ENCODE measurements at regions of chr6 and their contacts with region 1.

Region 1: GRCh38 chr6:119110601-119111548 is 32.4 kb upstream of the FAM184A start:
- DNase-seq: peak in 2 of 5 donors; percentile 16 to 44
- H3K4me3 ChIP-seq: no peak overlapping the region
- H3K27ac ChIP-seq: no peak overlapping the region
- H3K4me1 ChIP-seq: no peaks in the 10 kb centered on the region
- H3K27me3 ChIP-seq: no peaks in the 10 kb centered on the region
- CTCF ChIP-seq: peak; percentile 32 to 76 (median 56)
- EP300 ChIP-seq: no peak
- POLR2A ChIP-seq: no peak

Region 2: GRCh38 chr6:118240878-118241528 is 869.9 kb before region 1 on chr6:
- intact Hi-C with region 1: loop called in 1 of 4 experiments (anchors 5 kb)
- DNase-seq: no peak
- H3K4me3 ChIP-seq: no peak overlapping the region
- H3K27ac ChIP-seq: no peak overlapping the region
- H3K4me1 ChIP-seq: no peaks in the 10 kb centered on the region
- H3K27me3 ChIP-seq: no peaks in the 10 kb centered on the region
- CTCF ChIP-seq: no peak
- EP300 ChIP-seq: no peak
- POLR2A ChIP-seq: no peak

Region 3: GRCh38 chr6:118963003-118963402 is 147.9 kb before region 1 on chr6:
- intact Hi-C with region 1: loop called (anchors 2 to 5 kb)
- DNase-seq: no peak
- H3K4me3 ChIP-seq: no peak overlapping the region
- H3K27ac ChIP-seq: no peak overlapping the region
- H3K4me1 ChIP-seq: no peaks in the 10 kb centered on the region
- H3K27me3 ChIP-seq: no peaks in the 10 kb centered on the region
- CTCF ChIP-seq: no peak
- EP300 ChIP-seq: no peak
- POLR2A ChIP-seq: no peak

Region 4: DNA sequence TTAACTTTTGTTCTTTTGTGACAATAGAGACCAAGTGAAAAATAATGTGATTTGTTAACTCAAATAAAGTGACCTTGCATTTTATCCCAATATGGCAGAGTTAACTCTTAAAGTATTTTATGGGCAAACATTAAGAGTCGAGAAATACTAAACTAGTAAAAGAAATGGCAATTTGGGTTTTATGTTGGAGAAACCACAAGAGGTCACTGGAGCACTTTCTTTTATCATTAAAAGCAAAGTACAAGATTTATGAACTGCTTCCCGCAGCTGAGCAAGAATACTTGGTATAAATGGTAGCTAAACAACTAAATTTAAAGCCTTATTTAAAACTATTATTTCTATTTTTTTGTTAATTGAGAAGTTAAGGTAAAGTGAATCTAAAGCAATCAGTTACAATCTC is 142.5 kb before region 1 on chr6:
- intact Hi-C with region 1: loop called (anchors 2 to 5 kb)
- DNase-seq: no peak
- H3K4me3 ChIP-seq: no peak overlapping the region
- H3K27ac ChIP-seq: no peak overlapping the region
- H3K4me1 ChIP-seq: no peaks in the 10 kb centered on the region
- H3K27me3 ChIP-seq: no peaks in the 10 kb centered on the region
- CTCF ChIP-seq: peak in 2 of 3 donors; percentile 11 to 44
- EP300 ChIP-seq: no peak
- POLR2A ChIP-seq: no peak